ENCODE measurements at regions of chr12 and their contacts with region 1.

Region 1: DNA sequence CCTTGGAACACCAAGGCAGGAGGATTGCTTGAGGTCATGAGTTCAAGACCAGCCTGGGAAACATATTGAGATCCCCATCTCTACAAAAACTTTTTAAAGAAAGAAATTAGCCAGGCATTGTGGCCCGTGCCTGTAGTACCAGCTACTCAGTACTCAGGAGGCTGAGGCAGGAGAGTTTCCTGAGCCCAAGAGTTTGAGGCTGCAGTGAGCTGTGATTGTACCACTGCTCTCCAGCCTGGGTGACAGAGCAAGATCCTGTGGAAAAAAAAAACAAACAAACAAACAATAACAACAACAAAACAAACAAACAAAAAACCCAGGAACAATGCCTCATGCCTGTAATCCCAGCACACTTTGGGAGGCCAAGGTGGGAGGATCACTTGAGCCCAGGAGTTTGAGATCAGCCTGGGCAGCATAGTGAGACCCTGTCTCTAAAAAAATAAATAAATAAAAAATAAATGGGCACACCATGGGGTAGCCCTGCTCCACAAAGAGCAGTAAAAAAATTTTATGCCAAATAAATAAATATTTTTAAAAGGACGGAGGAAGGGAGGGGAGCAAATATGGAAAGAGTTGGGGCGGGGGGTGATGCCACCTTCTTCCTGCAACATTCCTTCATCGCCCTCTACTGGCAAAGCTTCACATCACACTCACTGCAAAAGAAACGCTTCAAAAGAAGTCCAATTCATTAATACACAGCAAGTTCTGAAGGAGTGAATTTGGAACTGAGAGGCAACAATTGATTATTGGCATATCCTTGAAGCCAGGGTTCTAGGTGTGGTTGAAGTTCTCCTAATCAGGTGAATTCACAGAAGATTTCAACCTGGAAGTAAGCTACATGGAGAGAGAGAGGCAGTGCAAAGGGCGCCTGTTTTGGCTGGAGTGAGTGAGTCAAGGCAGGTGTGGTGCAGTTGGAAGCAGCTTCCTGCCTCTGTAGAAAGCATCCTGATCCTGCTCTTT is 8.8 kb upstream of the GNPTAB start:
- DNase-seq: peak; percentile 82
- ATAC-seq: peak; percentile 79
- H3K4me3 Mint-ChIP-seq: no peak overlapping the region
- H3K27ac Mint-ChIP-seq: no peak overlapping the region
- H3K4me1 Mint-ChIP-seq: peaks cover 8% of the 10 kb centered on the region
- H3K27me3 Mint-ChIP-seq: no peaks in the 10 kb centered on the region
- CTCF ChIP-seq: peak; percentile 96

Region 2: GRCh38 chr12:101414533-101415119 is 425.0 kb before region 1 on chr12:
- CTCF ChIA-PET with region 1: interaction called, 12 read pairs
- POLR2A ChIA-PET with region 1: no interaction called
- intact Hi-C with region 1: loop called (anchors 10 kb)
- DNase-seq: peak; percentile 35
- ATAC-seq: no peak
- H3K4me3 Mint-ChIP-seq: no peak overlapping the region
- H3K27ac Mint-ChIP-seq: no peak overlapping the region
- H3K4me1 Mint-ChIP-seq: peaks cover 2% of the 10 kb centered on the region
- H3K27me3 Mint-ChIP-seq: peaks cover 8% of the 10 kb centered on the region
- CTCF ChIP-seq: peak; percentile 82

Region 3: GRCh38 chr12:101759396-101760047 is 80.1 kb before region 1 on chr12:
- CTCF ChIA-PET with region 1: interaction called, 36 read pairs
- POLR2A ChIA-PET with region 1: no interaction called
- intact Hi-C with region 1: no loop called
- DNase-seq: no peak
- ATAC-seq: peak; percentile 70
- H3K4me3 Mint-ChIP-seq: no peak overlapping the region
- H3K27ac Mint-ChIP-seq: no peak overlapping the region
- H3K4me1 Mint-ChIP-seq: no peaks in the 10 kb centered on the region
- H3K27me3 Mint-ChIP-seq: no peaks in the 10 kb centered on the region
- CTCF ChIP-seq: peak; percentile 72

Region 4: DNA sequence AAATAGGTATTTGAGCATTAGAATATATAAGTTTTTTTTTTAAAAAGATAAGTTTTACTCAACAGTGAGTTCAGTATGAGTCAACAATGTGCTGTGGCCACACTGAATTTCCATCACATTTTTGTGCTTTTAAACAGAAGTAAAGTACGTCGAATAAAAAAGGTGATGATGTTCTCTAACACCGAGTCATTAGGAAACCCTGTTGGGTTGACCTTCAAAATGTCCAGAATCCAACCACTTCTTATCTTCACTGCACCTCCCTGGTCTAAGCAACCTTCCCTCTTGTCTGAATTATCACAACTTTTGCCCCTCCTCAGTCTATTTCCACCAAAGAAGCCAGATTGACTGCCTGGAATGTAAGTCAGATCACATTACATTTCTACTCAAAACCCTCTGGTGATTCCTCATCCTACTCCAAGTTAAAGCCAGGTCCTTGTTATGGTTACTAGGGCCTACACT is 57.3 kb before region 1 on chr12:
- CTCF ChIA-PET with region 1: interaction called, 37 read pairs
- POLR2A ChIA-PET with region 1: no interaction called
- intact Hi-C with region 1: no loop called
- DNase-seq: peak; percentile 55
- ATAC-seq: peak; percentile 77
- H3K4me3 Mint-ChIP-seq: peak overlapping the region; percentile 1
- H3K27ac Mint-ChIP-seq: peak overlapping the region; percentile 90
- H3K4me1 Mint-ChIP-seq: peaks cover 25% of the 10 kb centered on the region
- H3K27me3 Mint-ChIP-seq: no peaks in the 10 kb centered on the region
- CTCF ChIP-seq: no peak

Region 5: DNA sequence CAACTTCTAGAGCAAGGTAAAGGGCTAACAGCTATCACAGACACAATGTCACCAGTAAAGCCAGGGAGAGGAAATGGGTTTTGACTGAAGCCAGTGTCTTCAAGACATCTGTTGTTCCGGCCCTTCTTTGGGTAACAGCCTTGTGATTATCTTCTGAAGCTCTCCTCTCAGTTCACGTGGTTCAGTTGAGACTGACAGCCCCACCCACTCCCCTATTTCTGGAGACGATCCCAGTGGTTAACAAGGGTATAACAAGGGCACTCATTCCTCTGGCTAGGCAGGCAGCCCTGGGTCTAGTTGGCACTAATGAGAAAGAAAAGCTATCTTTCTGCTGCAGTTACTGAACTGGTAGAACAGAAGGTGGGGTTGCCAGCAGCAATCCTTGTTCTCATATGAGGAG is 15.7 kb before region 1 on chr12:
- CTCF ChIA-PET with region 1: interaction called, 47 read pairs
- POLR2A ChIA-PET with region 1: interaction called, 5 read pairs
- intact Hi-C with region 1: no loop called
- DNase-seq: peak; percentile 82
- ATAC-seq: peak; percentile 92
- H3K4me3 Mint-ChIP-seq: peak overlapping the region; percentile 49
- H3K27ac Mint-ChIP-seq: peak overlapping the region; percentile 80
- H3K4me1 Mint-ChIP-seq: peaks cover 79% of the 10 kb centered on the region
- H3K27me3 Mint-ChIP-seq: no peaks in the 10 kb centered on the region
- CTCF ChIP-seq: peak; percentile 60